ENCODE measurements at regions of chr18 and their contacts with region 1.

Region 1: GRCh38 chr18:46402396-46402795 is 254.6 kb downstream of the LOXHD1 start:
- DNase-seq: no peak

Region 2: DNA sequence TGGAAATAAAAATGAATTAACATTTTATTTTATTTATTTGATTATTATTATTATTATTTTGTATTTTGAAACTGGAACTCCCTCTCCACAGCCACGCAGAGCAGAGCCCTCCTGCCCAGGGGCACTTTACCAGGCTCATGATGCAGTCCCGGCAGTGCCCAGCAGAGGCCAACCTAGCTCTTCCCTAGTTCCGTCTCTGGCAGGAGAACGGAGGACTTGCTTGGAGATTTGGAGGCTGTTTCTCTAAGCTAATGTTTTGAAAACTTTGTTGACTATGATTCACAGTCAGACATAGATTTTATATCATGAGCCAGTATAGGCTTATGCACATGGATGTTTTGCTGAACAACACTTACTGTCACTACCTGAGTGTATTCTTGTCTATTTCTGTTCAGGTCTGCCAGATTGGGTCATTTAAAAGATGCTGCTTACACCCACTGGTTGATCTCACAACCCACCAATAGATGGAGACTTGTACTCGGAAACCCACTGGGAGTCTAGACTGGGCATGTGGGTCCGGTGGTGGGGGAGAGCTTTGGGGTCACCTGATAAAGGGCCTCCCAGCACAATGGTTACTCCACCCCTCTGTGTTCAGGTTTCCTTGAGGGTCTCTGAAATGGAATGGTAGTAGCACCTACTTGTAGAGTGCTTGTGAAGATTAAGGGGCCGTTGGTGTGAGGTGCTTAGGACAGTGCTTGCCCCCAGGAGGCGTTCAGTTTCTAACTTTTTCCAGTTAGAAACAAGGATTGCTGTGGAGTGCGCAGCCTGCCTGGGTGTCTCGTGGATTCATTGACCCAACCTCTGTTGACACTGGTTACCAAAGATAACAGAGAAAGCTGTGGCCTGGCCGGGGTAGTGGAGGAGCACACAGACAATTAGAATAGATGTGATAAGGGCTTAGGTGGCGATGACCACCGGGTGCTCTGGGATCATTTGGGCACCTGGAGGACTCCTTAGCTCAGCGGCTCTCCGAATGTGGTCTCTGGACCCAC is 120.9 kb before region 1 on chr18:
- intact Hi-C with region 1: no loop called
- DNase-seq: peak; percentile 86

Region 3: DNA sequence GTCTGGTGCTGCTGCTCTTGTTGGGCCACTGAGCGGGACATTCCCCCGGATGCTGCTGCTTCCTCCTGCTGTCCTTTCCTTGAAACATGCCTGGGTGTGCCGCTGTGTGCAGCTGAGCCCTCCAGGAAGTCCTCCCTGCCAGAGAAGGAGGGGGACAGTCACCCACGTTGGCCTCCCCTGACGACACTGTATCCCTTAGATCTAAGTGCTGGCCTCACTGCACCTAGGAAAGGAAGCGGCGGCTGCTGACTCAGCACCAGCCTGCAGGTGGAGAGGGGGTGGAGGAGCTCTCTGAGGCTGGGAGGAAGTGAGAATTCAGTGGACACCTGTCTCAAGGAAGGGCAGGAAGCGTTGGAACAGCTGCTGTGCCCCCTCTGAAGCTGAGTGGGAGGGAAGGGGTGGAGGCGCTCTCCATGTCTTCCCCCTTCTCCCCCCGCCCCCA is 58.4 kb before region 1 on chr18:
- intact Hi-C with region 1: loop called in 1 of 2 experiments (anchors 5 kb)
- DNase-seq: no peak

Region 4: DNA sequence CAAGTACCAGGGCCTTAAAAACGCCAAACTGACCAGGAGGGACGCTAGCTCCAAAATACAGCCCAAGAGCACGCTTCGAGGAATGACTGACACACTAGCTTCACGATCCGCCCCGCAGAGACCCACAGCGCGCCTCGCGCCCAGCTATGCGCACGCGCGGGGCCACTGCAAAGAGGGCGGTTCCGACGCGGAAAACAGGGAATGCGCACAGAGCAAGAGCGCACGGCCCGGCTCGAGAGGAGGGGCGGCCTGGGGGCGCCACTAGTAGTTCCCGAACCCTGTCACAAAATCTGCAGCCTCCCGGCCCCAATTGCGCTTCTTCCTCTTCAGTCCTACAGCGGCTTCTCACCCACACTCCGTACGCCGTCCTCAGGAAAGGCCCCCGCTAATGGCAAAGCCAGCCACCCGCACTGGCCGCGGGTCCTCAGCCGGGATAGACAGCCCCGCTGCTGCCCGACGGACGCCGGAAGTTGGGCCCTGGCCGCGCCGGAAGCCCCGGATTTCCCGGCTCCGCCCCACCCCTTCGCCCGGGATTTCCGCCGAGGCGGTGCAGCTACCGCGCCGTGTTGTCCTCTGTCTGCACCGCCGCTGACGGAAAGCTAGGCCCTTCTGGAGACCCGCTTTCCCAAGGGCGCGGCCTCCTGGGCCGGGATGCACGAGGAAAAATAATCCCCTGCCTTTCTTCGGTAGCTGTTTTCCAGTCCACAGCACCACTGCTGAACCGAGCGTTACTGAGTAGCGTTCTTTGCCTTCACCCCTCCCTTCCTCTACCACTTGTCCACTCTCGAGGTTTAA is 747.8 kb after region 1 on chr18 and contains the start of gene HDHD2:
- intact Hi-C with region 1: no loop called
- DNase-seq: peak; percentile 95
- total RNA-seq, gene HDHD2: 28.7 to 30.6 TPM

Measured in posterior vena cava (tissue), 2 donors.